ENCODE measurements at regions of chr19 and their contacts with region 1.

Region 1: GRCh38 chr19:49148784-49149651 is 6.2 kb downstream of the HRC start:
- DNase-seq: no peak
- H3K4me3 ChIP-seq: peak overlapping the region; percentile 55 to 84
- H3K27ac ChIP-seq: peak overlapping the region; percentile 66
- H3K4me1 ChIP-seq: peaks cover 48% of the 10 kb centered on the region
- H3K27me3 ChIP-seq: no peaks in the 10 kb centered on the region
- CTCF ChIP-seq: no peak
- POLR2A ChIP-seq: peak in 1 of 2 donors; percentile 51

Region 2: DNA sequence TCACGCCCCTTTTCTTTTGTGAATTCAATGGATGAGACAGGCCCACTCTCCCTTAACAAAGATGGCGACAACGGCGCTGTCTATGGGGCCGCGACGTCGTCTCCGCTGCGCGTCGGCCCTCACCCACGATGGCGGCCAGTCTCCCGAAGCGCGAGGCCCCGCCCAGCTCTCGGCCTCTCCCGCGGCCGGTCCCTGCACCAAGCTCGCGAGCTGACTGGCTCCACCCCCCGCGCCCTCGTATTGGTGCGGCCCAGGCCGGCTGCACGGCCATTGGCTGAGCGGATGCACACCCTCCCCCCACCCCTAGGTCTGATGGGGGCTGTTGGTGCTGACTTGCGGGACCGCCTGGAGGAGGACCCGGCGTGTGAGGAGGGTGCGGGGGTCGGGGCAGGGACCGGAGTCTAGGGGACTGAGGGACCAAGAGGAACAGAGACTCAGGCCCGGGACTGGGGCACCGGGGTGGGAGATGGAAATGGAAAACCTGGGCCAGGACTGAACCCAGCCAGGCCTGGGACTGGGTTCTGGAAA is 524.9 kb before region 1 on chr19:
- intact Hi-C with region 1: no loop called
- DNase-seq: no peak
- H3K4me3 ChIP-seq: peak overlapping the region; percentile 19 to 39
- H3K27ac ChIP-seq: peak overlapping the region; percentile 84
- H3K4me1 ChIP-seq: peaks cover 33% of the 10 kb centered on the region
- H3K27me3 ChIP-seq: no peaks in the 10 kb centered on the region
- CTCF ChIP-seq: no peak
- POLR2A ChIP-seq: no peak

Region 3: GRCh38 chr19:48993175-48994034 is 155.6 kb before region 1 on chr19 and contains the starts of genes GYS1 and RUVBL2:
- intact Hi-C with region 1: loop called (anchors 10 kb)
- DNase-seq: peak; percentile 99
- H3K4me3 ChIP-seq: peak within 1 kb of the TSS; percentile 90 to 98
- H3K27ac ChIP-seq: peak within 1 kb of the TSS; percentile 99
- H3K4me1 ChIP-seq: peaks cover 46% of the 10 kb centered on the region
- H3K27me3 ChIP-seq: no peaks in the 10 kb centered on the region
- CTCF ChIP-seq: peak; percentile 86 to 98 (median 86)
- POLR2A ChIP-seq: peak; percentile 72 to 75
- total RNA-seq, gene GYS1: 32.2 TPM
- total RNA-seq, gene RUVBL2: 100 TPM

Region 4: GRCh38 chr19:49487277-49488045 is 338.4 kb after region 1 on chr19 and contains the start of gene RPL13A:
- intact Hi-C with region 1: no loop called
- DNase-seq: peak; percentile 99
- H3K4me3 ChIP-seq: peak within 1 kb of the TSS; percentile 82 to 96
- H3K27ac ChIP-seq: peak within 1 kb of the TSS; percentile 93
- H3K4me1 ChIP-seq: peaks cover 33% of the 10 kb centered on the region
- H3K27me3 ChIP-seq: no peaks in the 10 kb centered on the region
- CTCF ChIP-seq: no peak
- POLR2A ChIP-seq: peak in 1 of 2 donors; percentile 96
- total RNA-seq, gene RPL13A: 3,900 TPM

Measured in vagina (tissue), 2 donors.